ENCODE measurements at regions of chr4 and their contacts with region 1.

Region 1: DNA sequence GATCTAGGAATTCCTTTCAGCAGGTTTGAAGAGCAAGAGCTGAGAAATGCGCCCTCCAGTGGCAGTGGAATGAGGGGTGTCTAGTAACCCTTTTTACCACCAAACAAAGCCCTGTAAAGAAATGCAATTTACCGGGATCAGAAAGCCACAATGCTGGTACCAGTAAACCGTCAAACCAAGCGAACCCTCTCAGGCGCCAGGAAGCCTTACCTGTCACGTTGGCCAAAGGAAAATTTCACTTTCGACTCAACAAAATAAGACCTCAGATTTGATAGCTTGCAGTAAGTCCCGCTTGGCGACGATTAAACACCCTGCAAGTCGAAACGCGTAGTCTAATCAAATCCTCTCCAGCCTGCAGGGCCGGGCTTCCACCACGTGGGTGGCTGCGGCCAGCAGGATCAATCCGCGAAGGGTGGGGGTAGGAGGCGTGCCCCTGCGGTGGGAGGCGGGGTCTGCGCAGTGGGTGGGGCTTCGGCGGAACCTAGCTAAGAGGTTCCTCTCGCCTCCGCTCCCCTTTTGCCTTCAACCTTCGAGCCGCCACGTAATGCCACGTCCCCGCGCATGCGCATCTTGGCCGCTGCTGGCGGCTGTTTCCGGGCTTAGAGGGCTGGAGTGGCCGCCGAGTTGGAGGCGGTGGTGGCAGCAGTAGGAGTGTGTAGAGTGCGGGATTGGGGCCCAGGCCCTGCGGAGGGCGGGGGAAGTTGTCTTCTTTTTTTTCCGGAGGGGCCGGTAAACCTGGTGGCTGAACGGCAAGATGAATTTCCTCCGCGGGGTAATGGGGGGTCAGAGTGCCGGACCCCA is at the start of gene USO1:
- DNase-seq: peak; percentile 99 to 100 (median 99)
- ATAC-seq: peak; percentile 91
- H3K4me3 ChIP-seq: peak within 1 kb of the TSS; percentile 93
- H3K4me3 Mint-ChIP-seq: peak within 1 kb of the TSS; percentile 99
- H3K27ac ChIP-seq: peak within 1 kb of the TSS; percentile 65 to 83
- H3K27ac Mint-ChIP-seq: peak within 1 kb of the TSS; percentile 95
- H3K4me1 ChIP-seq: peaks cover 27% of the 10 kb centered on the region
- H3K4me1 Mint-ChIP-seq: peaks cover 64% of the 10 kb centered on the region
- H3K27me3 ChIP-seq: no peaks in the 10 kb centered on the region
- H3K27me3 Mint-ChIP-seq: no peaks in the 10 kb centered on the region
- CTCF ChIP-seq: peak; percentile 78
- total RNA-seq, gene USO1: 10.5 to 10.9 TPM

Region 2: GRCh38 chr4:75514131-75514948 is 209.9 kb before region 1 on chr4 and contains the starts of genes RCHY1 and THAP6:
- CTCF ChIA-PET with region 1: interaction called, 8 read pairs
- POLR2A ChIA-PET with region 1: interaction called, 46 read pairs
- intact Hi-C with region 1: loop called (anchors 1 to 5 kb)
- DNase-seq: peak; percentile 84 to 97 (median 88)
- ATAC-seq: peak; percentile 86
- H3K4me3 ChIP-seq: peak within 1 kb of the TSS; percentile 77
- H3K4me3 Mint-ChIP-seq: no peak within 1 kb of the TSS
- H3K27ac ChIP-seq: peak within 1 kb of the TSS; percentile 94 to 97
- H3K27ac Mint-ChIP-seq: no peak within 1 kb of the TSS
- H3K4me1 ChIP-seq: peaks cover 21% of the 10 kb centered on the region
- H3K4me1 Mint-ChIP-seq: peaks cover 40% of the 10 kb centered on the region
- H3K27me3 ChIP-seq: no peaks in the 10 kb centered on the region
- H3K27me3 Mint-ChIP-seq: no peaks in the 10 kb centered on the region
- CTCF ChIP-seq: no peak
- total RNA-seq, gene RCHY1: 33.6 to 37.0 TPM
- total RNA-seq, gene THAP6: 19.1 to 22.8 TPM

Region 3: GRCh38 chr4:75644095-75644494 is 80.2 kb before region 1 on chr4:
- CTCF ChIA-PET with region 1: no interaction called
- POLR2A ChIA-PET with region 1: interaction called, 14 read pairs
- intact Hi-C with region 1: no loop called
- DNase-seq: no peak
- ATAC-seq: no peak
- H3K4me3 ChIP-seq: no peak overlapping the region
- H3K4me3 Mint-ChIP-seq: no peak overlapping the region
- H3K27ac ChIP-seq: no peak overlapping the region
- H3K27ac Mint-ChIP-seq: peak overlapping the region; percentile 19
- H3K4me1 ChIP-seq: no peaks in the 10 kb centered on the region
- H3K4me1 Mint-ChIP-seq: peaks cover 12% of the 10 kb centered on the region
- H3K27me3 ChIP-seq: no peaks in the 10 kb centered on the region
- H3K27me3 Mint-ChIP-seq: no peaks in the 10 kb centered on the region
- CTCF ChIP-seq: no peak

Region 4: GRCh38 chr4:75666299-75666698 is 58.0 kb before region 1 on chr4:
- CTCF ChIA-PET with region 1: interaction called, 15 read pairs
- POLR2A ChIA-PET with region 1: interaction called, 175 read pairs
- intact Hi-C with region 1: no loop called
- DNase-seq: no peak
- ATAC-seq: peak; percentile 43
- H3K4me3 ChIP-seq: no peak overlapping the region
- H3K4me3 Mint-ChIP-seq: peak overlapping the region; percentile 56
- H3K27ac ChIP-seq: no peak overlapping the region
- H3K27ac Mint-ChIP-seq: peak overlapping the region; percentile 60
- H3K4me1 ChIP-seq: peaks cover 43% of the 10 kb centered on the region
- H3K4me1 Mint-ChIP-seq: peaks cover 79% of the 10 kb centered on the region
- H3K27me3 ChIP-seq: no peaks in the 10 kb centered on the region
- H3K27me3 Mint-ChIP-seq: no peaks in the 10 kb centered on the region
- CTCF ChIP-seq: no peak

Region 5: DNA sequence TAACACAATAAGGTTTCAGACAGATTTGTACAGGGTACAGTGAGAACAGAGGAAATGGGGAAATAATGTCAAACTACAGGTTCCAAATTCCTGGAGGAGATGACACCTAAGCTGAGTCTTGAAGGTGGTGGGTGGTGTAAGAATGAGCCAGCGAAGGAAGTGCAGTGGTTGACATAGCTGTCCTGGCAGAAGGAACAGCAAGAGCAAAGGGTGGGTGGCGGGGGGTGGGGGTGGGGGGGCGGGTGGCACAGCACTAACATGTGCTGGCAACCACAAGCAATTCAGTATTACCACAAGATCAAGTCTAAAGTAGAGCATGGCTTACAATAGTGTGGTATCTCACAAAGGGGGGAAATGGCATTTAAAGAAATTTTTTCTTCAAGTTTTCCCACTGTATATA is 37.9 kb before region 1 on chr4:
- CTCF ChIA-PET with region 1: interaction called, 6 read pairs
- POLR2A ChIA-PET with region 1: interaction called, 11 read pairs
- intact Hi-C with region 1: loop called in 1 of 2 experiments (anchors 1 kb)
- DNase-seq: peak in 5 of 14 experiments; percentile 14 to 64 (median 53)
- ATAC-seq: peak; percentile 75
- H3K4me3 ChIP-seq: no peak overlapping the region
- H3K4me3 Mint-ChIP-seq: no peak overlapping the region
- H3K27ac ChIP-seq: peak overlapping the region in 1 of 2 donors; percentile 9
- H3K27ac Mint-ChIP-seq: peak overlapping the region; percentile 43
- H3K4me1 ChIP-seq: peaks cover 16% of the 10 kb centered on the region
- H3K4me1 Mint-ChIP-seq: peaks cover 40% of the 10 kb centered on the region
- H3K27me3 ChIP-seq: no peaks in the 10 kb centered on the region
- H3K27me3 Mint-ChIP-seq: no peaks in the 10 kb centered on the region
- CTCF ChIP-seq: no peak

Region 6: DNA sequence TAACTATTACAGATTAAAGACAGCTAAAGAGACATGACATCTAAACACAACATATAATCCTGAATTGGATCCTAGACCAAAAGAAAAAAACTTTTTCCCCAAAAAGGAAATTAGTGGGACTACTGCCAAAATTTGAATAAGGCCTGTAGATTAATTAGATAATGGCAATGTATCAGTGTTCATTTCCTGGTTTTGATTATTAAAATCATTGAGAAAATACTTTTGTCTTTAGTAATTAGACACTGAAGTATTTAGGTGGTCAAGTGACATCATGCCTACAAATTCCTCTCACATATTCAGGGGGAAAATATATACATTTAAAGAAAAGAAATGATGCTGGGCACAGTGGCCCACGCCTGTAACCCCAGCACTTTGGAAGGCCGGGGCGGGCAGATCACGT is 10.3 kb before region 1 on chr4:
- CTCF ChIA-PET with region 1: interaction called, 14 read pairs
- POLR2A ChIA-PET with region 1: interaction called, 15 read pairs
- intact Hi-C with region 1: no loop called
- DNase-seq: no peak
- ATAC-seq: no peak
- H3K4me3 ChIP-seq: no peak overlapping the region
- H3K4me3 Mint-ChIP-seq: no peak overlapping the region
- H3K27ac ChIP-seq: no peak overlapping the region
- H3K27ac Mint-ChIP-seq: no peak overlapping the region
- H3K4me1 ChIP-seq: no peaks in the 10 kb centered on the region
- H3K4me1 Mint-ChIP-seq: no peaks in the 10 kb centered on the region
- H3K27me3 ChIP-seq: no peaks in the 10 kb centered on the region
- H3K27me3 Mint-ChIP-seq: no peaks in the 10 kb centered on the region
- CTCF ChIP-seq: no peak

Region 7: DNA sequence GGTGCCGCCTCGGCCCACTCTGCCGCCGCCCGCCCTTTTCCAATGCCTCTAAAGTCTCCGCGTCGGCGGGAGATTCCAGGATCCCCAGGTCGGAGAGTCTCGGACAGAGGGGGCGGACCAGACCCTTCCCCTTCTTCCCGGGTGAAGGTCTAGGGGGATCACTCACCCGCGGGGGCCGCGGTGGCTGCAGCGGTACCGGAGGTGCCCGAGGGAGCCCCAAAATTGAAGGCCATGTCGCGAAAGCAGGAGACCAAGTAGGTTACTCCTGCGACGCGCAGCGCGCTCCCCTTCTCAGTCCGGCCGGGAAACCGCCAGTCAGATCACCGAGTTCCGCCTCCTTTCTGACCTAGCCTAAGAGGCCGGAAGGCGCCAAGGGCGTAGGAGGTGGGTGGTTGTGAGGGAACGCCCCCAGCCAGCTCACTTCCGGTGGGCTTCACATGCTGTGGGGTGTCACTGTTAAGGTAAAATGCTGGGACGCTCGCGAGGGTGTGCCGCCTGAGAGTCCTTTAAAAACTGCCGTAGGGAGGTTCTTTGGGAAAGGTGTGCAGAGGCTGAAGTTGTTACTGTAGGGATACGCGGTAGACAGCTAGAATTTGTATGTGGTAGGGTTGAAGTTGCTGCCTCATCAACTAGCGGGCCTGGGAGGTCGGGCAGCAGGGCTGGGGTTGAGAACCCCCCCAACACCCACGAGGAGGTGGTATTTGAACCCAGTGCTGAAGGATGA is 424.0 kb after region 1 on chr4 and contains the start of gene NUP54:
- CTCF ChIA-PET with region 1: no interaction called
- POLR2A ChIA-PET with region 1: interaction called, 5 read pairs
- intact Hi-C with region 1: loop called in 1 of 2 experiments (anchors 2 kb)
- DNase-seq: peak; percentile 90 to 97 (median 93)
- ATAC-seq: peak; percentile 97
- H3K4me3 ChIP-seq: peak within 1 kb of the TSS; percentile 95
- H3K4me3 Mint-ChIP-seq: peak within 1 kb of the TSS; percentile 99
- H3K27ac ChIP-seq: peak within 1 kb of the TSS; percentile 80 to 90
- H3K27ac Mint-ChIP-seq: peak within 1 kb of the TSS; percentile 92
- H3K4me1 ChIP-seq: peaks cover 15% of the 10 kb centered on the region
- H3K4me1 Mint-ChIP-seq: peaks cover 38% of the 10 kb centered on the region
- H3K27me3 ChIP-seq: no peaks in the 10 kb centered on the region
- H3K27me3 Mint-ChIP-seq: no peaks in the 10 kb centered on the region
- CTCF ChIP-seq: no peak
- total RNA-seq, gene NUP54: 94.1 to 108 TPM